Esophagus muscularis mucosa (tissue), 4 donors: ENCODE measurements at regions of chr12 and their contacts with region 1.

Region 1: GRCh38 chr12:49866859-49867579 is 24.1 kb upstream of the BCDIN3D start:
- DNase-seq: no peak
- H3K4me3 ChIP-seq: no peak overlapping the region
- H3K27ac ChIP-seq: no peak overlapping the region
- H3K4me1 ChIP-seq: peaks cover 30 to 33% (median 31%) of the 10 kb centered on the region in 4 donors
- H3K27me3 ChIP-seq: peaks cover 0 to 3% (median 0%) of the 10 kb centered on the region in 4 donors
- CTCF ChIP-seq: peak in 2 of 3 experiments; percentile 90 to 92
- EP300 ChIP-seq: no peak
- POLR2A ChIP-seq: no peak

Region 2: GRCh38 chr12:49945394-49946080 is 78.5 kb after region 1 on chr12:
- intact Hi-C with region 1: loop called (anchors 5 kb)
- DNase-seq: peak; percentile 95
- H3K4me3 ChIP-seq: peak overlapping the region; percentile 16 to 52 (median 30)
- H3K27ac ChIP-seq: peak overlapping the region in 2 of 4 donors; percentile 35 to 37
- H3K4me1 ChIP-seq: peaks cover 5 to 11% (median 10%) of the 10 kb centered on the region in 4 donors
- H3K27me3 ChIP-seq: peaks cover 0 to 8% (median 0%) of the 10 kb centered on the region in 4 donors
- CTCF ChIP-seq: peak; percentile 67 to 89 (median 72)
- EP300 ChIP-seq: no peak
- POLR2A ChIP-seq: no peak

Region 3: DNA sequence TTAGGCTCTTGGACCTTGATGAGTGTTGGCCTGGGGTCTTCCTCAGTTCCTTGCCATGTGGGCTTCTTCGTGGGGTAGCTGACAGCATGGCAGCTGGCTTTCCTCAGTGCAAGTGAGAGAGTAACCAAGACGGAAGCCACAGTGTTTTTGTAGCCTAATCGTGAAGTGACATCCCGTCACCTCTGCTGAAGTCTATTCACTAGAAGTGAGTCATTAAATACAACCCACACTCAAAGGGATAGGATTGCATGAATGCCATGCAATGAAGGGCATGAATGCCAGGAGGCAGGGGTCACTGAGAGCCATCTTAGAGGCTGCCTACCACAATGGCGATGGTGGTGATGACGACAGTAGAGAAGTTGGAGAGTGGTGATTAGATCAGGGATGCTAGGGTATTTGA is 176.8 kb after region 1 on chr12:
- intact Hi-C with region 1: loop called (anchors 10 kb)
- DNase-seq: no peak
- H3K4me3 ChIP-seq: no peak overlapping the region
- H3K27ac ChIP-seq: no peak overlapping the region
- H3K4me1 ChIP-seq: no peaks in the 10 kb centered on the region
- H3K27me3 ChIP-seq: no peaks in the 10 kb centered on the region
- CTCF ChIP-seq: no peak
- EP300 ChIP-seq: no peak
- POLR2A ChIP-seq: no peak